ENCODE measurements at regions of chr15 and their contacts with region 1.

Region 1: DNA sequence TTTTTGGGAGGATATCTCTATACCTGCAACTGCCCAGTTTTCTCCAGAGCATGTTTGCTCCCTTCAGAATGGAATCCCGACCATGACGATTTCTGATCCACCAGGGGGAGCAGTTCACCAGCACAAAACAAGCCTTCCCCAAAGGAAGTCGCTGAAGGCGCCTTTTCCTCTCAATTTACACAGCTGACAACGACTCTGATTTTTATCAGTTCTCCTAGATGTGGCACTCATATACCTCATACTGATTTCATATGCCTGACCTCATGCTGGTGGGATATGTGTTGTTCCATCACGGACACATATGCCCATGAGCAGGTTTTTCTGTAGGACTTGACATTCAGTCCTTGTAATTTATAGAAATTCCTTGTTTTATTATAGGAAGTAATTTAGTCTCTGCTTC is 1028.2 kb downstream of the MCTP2 start:
- DNase-seq: peak; percentile 78
- H3K4me3 Mint-ChIP-seq: peak overlapping the region; percentile 15
- H3K27ac Mint-ChIP-seq: no peak overlapping the region
- H3K4me1 Mint-ChIP-seq: peaks cover 26% of the 10 kb centered on the region
- H3K27me3 Mint-ChIP-seq: no peaks in the 10 kb centered on the region
- CTCF ChIP-seq: peak; percentile 85

Region 2: DNA sequence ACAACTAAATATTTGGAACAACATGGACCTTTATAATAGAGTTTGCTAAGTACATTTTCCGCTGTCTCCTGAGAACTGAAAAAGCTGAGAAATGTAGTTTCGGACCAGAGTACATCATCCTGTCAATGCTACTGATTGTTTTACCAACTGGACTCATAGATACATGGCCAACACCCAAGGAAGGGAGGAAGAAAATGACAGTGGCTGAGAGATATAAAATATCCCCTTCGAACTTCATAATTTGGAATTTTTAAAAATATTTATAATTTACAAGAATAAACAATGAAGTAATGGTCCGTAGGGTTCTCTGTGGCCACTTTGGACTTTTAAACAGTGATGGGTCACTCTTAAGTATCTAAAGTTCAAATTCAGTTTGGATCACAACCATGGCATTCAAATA is 14.6 kb after region 1 on chr15:
- CTCF ChIA-PET with region 1: interaction called, 10 read pairs
- intact Hi-C with region 1: no loop called
- DNase-seq: no peak
- H3K4me3 Mint-ChIP-seq: no peak overlapping the region
- H3K27ac Mint-ChIP-seq: no peak overlapping the region
- H3K4me1 Mint-ChIP-seq: no peaks in the 10 kb centered on the region
- H3K27me3 Mint-ChIP-seq: no peaks in the 10 kb centered on the region
- CTCF ChIP-seq: no peak

Region 3: GRCh38 chr15:96345560-96346399 is 1086.3 kb after region 1 on chr15:
- CTCF ChIA-PET with region 1: no interaction called
- intact Hi-C with region 1: loop called (anchors 2 kb)
- DNase-seq: peak; percentile 80
- H3K4me3 Mint-ChIP-seq: no peak overlapping the region
- H3K27ac Mint-ChIP-seq: no peak overlapping the region
- H3K4me1 Mint-ChIP-seq: peaks cover 70% of the 10 kb centered on the region
- H3K27me3 Mint-ChIP-seq: no peaks in the 10 kb centered on the region
- CTCF ChIP-seq: peak; percentile 66

Region 4: GRCh38 chr15:97234851-97235610 is 1975.5 kb after region 1 on chr15:
- CTCF ChIA-PET with region 1: no interaction called
- intact Hi-C with region 1: loop called (anchors 5 kb)
- DNase-seq: peak; percentile 76
- H3K4me3 Mint-ChIP-seq: peak overlapping the region; percentile 31
- H3K27ac Mint-ChIP-seq: peak overlapping the region; percentile 60
- H3K4me1 Mint-ChIP-seq: peaks cover 26% of the 10 kb centered on the region
- H3K27me3 Mint-ChIP-seq: no peaks in the 10 kb centered on the region
- CTCF ChIP-seq: peak; percentile 95

Measured in Calu3 (cell line).